ENCODE measurements at regions of chr9 and their contacts with region 1.

Region 1: DNA sequence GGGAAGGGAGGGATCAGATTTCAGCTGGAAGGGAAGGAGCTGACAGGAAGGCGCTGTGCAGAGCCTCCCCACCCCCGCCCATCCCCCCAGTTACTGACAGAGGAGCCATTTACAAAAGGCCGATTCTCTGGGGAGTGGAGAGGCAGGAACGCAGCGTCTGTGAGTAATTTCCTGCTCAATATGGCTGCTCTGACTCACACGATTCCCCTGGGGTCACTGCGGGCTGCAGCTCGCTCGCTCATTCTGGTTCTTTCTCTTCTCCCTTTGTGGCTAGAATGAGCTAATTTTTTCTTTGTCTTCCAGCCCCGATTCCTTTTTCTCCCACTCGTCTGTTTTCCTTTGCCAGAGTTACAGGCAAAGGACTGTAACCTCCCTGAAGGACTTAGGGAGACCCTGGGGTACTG is 28.8 kb downstream of the PTPA start:
- DNase-seq: peak; percentile 98
- H3K4me3 ChIP-seq: peak overlapping the region in 1 of 3 experiments; percentile 31
- H3K27ac ChIP-seq: peak overlapping the region; percentile 99
- H3K4me1 ChIP-seq: peaks cover 55% of the 10 kb centered on the region
- H3K27me3 ChIP-seq: no peaks in the 10 kb centered on the region
- CTCF ChIP-seq: no peak
- POLR2A ChIP-seq: peak; percentile 85

Region 2: DNA sequence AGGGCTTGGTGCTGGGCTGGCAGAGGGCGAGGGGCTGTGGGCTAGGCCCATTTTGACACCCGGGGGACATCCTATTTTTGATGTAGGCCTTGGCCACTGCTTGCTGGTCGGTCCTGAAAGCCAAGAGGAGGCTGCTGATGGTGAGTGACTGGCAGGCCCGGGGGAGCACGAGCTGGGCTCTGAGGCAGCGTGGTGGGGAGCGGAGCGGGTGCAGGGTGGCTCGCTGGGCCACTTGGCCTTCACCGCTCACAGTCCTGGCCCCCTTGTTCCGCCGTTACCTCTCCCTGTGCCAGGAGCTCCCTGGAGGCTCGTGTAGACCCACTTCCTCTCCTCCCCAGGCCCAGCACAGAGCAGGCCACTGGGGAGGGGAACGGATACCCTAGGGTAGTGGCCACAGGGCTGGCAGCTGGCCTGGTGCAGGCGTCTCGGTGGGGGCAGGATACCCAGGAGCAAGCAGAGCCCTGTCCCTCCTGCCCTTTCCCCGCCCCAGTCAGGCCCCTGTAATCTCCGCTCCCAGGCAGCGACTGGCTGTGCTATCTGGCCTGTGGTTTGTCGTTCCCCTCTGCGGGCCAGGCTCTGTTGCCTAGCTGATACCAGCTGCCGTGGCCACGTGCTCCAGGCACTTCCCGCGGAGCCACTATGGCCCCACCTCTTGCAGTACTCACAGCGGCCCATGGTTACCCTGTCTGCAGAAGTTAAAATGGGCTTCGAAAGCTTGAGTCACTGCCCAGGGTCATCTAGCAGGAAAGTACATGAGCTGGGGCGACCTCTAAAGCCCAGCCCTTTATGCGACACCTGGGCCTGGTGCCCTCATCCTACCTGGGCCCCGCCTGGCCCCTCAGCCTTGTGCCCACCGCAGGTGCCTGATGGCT is 70.8 kb before region 1 on chr9:
- CTCF ChIA-PET with region 1: no interaction called
- POLR2A ChIA-PET with region 1: no interaction called
- dilution Hi-C with region 1: no loop called
- intact Hi-C with region 1: no loop called
- DNase-seq: no peak
- H3K4me3 ChIP-seq: no peak overlapping the region
- H3K27ac ChIP-seq: no peak overlapping the region
- H3K4me1 ChIP-seq: no peaks in the 10 kb centered on the region
- H3K27me3 ChIP-seq: no peaks in the 10 kb centered on the region
- CTCF ChIP-seq: no peak
- POLR2A ChIP-seq: no peak

Region 3: DNA sequence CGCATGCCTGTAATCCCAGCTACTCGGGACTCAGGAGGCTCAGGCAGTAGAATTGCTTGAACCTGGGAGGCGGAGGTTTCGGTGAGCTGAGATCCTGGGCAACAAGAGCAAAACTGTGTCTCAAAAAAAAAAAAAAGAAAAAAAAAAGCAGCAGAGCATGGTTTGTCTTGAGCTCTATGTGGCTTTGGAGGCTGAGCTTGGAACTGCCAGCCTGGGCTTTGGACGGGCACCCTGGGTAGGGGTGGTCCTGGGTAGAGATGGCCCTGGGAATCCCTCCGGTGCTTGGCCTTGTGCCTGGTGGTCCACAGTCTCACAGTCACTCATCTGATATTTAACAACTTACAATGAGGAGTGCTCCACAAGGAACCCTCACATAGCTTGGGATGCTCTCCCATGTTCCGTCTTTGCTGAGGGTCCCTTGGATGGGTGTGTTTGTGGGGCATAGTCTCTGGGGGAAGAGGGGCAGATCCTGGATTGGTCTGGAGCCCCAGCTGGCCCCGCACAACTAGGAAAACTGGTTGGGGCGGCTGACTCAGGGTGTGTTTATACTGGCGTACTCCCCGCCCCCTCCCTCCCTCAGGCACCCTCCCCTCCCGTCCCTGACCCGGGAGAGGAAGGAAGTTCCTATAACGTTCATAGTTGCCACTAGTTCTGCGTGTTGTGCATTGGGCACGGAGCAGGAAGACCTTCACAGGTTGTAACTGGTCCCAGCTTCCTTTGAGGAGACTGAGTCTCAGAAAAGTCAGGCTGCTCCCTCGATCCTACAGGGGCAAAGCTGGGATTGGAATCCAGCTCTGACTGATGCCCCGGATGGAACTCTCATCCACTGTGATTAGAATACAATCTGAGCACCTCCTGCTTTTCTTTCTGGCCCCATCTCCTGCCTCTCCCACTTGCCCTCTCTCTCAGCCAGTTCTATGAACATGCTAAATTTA is 26.9 kb after region 1 on chr9:
- CTCF ChIA-PET with region 1: interaction called, 287 read pairs
- POLR2A ChIA-PET with region 1: interaction called, 9 read pairs
- dilution Hi-C with region 1: no loop called
- intact Hi-C with region 1: loop called (anchors 1 kb)
- DNase-seq: peak; percentile 90
- H3K4me3 ChIP-seq: no peak overlapping the region
- H3K27ac ChIP-seq: peak overlapping the region; percentile 88
- H3K4me1 ChIP-seq: peaks cover 31% of the 10 kb centered on the region
- H3K27me3 ChIP-seq: no peaks in the 10 kb centered on the region
- CTCF ChIP-seq: no peak
- POLR2A ChIP-seq: peak; percentile 66

Region 4: GRCh38 chr9:129460323-129461261 is 320.6 kb after region 1 on chr9:
- CTCF ChIA-PET with region 1: interaction called, 17 read pairs
- POLR2A ChIA-PET with region 1: no interaction called
- dilution Hi-C with region 1: no loop called
- intact Hi-C with region 1: loop called (anchors 1 kb)
- DNase-seq: peak; percentile 96
- H3K4me3 ChIP-seq: peak overlapping the region in 2 of 3 experiments; percentile 16 to 18
- H3K27ac ChIP-seq: peak overlapping the region; percentile 98
- H3K4me1 ChIP-seq: peaks cover 11% of the 10 kb centered on the region
- H3K27me3 ChIP-seq: no peaks in the 10 kb centered on the region
- CTCF ChIP-seq: no peak
- POLR2A ChIP-seq: no peak

Region 5: DNA sequence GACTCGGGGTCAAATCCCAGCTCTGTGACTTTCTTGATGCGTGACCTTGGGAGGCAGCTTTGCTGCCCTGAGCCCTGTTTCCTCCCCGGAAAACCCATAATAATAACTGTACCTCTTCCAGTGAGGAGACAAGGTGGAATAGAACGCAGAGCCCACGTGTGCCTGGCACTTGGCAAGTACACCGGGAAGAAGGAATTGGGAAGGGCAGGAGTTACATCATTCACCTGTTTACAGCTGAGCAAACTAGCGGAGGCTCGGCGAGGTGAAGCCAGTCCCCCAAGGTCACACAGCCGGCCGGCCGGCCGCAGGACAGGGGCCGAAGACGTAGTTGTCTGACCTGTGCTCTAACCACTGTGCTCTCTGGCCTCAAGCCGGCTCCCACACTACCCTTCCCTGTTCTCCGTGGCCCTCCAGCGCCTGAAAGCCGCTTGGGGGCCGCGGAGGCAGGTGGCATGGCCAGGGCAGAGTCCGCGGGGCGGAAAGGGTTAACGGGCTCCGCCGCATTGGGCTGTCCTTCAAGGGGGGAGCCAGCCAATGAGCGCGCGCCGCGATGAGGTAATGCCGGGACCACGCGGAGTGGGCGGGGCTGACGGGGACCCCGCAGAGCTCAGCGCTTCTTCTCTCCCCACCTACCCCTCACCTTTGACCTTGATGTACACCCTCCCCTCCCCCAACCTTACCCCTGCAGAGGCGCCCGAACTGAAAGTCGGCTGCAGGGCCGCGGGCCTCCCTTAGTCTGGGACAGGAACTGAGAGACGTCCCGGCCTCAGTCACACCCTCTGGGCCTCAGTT is 355.7 kb after region 1 on chr9:
- CTCF ChIA-PET with region 1: interaction called, 24 read pairs
- POLR2A ChIA-PET with region 1: interaction called, 16 read pairs
- dilution Hi-C with region 1: no loop called
- intact Hi-C with region 1: loop called (anchors 1 kb)
- DNase-seq: peak; percentile 85
- H3K4me3 ChIP-seq: peak overlapping the region in 2 of 3 experiments; percentile 26 to 37
- H3K27ac ChIP-seq: peak overlapping the region; percentile 72
- H3K4me1 ChIP-seq: peaks cover 31% of the 10 kb centered on the region
- H3K27me3 ChIP-seq: no peaks in the 10 kb centered on the region
- CTCF ChIP-seq: no peak
- POLR2A ChIP-seq: no peak

Region 6: DNA sequence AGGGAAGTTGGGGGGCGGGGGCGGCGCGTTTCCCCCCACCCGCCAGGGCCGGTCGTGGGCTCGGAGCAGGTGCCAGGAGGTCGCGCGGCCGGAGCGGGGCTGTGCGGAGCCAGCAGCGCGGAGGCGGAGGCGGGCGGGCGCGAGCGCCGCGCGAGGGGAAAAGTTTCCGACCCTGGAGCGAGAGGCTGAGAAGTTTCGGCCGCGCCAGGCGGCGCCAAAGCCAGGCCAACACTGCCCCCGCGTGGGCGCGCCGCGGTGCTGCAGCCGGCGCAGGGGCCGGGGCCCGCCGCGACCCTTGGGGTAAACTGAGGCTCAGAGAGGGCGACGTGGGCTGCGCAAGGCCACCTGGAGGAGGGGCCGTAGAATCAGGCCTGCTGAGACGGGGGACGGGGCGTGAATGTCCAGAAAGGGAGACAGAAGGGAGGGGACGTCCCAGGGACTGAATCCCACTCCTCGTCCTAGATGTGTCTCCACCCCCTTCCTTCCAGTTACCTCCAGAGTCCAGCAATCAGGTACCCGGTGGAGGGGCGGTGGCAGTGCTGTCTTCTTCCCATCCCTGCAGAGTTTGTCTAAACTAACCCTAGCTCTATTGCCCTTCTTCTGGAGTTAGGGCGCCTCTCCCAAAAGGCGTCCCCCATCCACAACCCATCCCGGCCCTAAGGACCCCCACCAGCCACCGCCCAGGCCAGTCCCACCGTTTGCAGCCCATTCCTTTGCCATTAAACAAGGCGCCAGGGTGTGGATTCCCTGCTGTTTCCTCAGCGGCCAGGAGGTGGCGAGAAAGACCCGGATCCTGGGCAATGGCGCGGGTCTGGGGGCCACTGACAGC is 470.7 kb after region 1 on chr9:
- CTCF ChIA-PET with region 1: interaction called, 100 read pairs
- POLR2A ChIA-PET with region 1: interaction called, 4 read pairs
- dilution Hi-C with region 1: no loop called
- intact Hi-C with region 1: loop called (anchors 1 kb)
- DNase-seq: peak; percentile 64
- H3K4me3 ChIP-seq: peak overlapping the region; percentile 24 to 56 (median 46)
- H3K27ac ChIP-seq: peak overlapping the region; percentile 16
- H3K4me1 ChIP-seq: peaks cover 14% of the 10 kb centered on the region
- H3K27me3 ChIP-seq: peaks cover 0 to 5% of the 10 kb centered on the region in 2 experiments
- CTCF ChIP-seq: peak; percentile 86 to 96
- POLR2A ChIP-seq: no peak

Region 7: DNA sequence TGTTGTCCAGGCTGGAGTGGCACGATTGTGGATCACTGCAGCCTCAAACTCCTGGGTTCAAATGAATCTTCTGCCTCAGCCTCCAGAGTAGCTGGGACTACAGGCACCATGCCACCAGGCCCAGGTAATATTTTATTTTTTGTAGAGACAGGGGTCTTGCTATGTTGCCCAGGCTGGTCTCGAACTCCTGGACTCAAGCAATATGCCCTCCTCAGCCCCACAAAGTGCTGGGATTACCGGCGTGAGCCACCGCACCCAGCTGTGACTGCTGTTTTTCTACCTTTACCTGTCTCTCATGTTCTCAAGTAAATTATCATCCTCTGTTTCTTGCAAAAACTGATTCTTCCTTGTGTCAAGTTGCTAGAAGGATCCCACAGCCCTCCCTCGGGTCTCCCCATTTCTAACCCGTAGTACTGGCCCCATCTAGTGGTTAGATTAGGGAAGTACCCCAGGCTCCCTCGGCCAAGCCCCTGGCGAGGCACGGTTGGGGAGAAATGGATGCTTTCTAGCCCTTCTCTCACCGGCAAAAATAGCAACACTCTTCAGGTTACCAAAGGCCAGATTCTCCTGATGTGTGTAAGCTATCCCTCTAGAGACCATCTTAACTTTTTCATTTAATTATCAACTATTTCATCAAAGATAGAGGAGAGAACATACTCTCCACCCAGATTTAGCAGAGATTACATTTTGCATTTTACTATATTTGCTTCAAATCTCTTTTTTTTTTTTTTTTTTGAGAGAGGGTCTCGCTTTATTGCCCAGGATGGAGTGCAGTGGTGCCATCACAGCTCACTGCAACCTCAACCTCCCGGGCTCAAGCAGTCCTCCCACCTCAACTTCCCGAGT is 643.7 kb after region 1 on chr9:
- CTCF ChIA-PET with region 1: interaction called, 5 read pairs
- POLR2A ChIA-PET with region 1: no interaction called
- dilution Hi-C with region 1: no loop called
- intact Hi-C with region 1: loop called (anchors 5 kb)
- DNase-seq: peak; percentile 62
- H3K4me3 ChIP-seq: no peak overlapping the region
- H3K27ac ChIP-seq: no peak overlapping the region
- H3K4me1 ChIP-seq: no peaks in the 10 kb centered on the region
- H3K27me3 ChIP-seq: peaks cover 0 to 2% of the 10 kb centered on the region in 2 experiments
- CTCF ChIP-seq: peak; percentile 81 to 84
- POLR2A ChIP-seq: no peak